HEK293 (cell line): ENCODE measurements at regions of chr11 and their contacts with region 1.

Region 1: GRCh38 chr11:66311965-66312548 is 4.8 kb downstream of the CD248 start:
- H3K4me3 ChIP-seq: peak overlapping the region; percentile 50
- H3K27ac ChIP-seq: peak overlapping the region; percentile 52; the same call in 1 of the 2 replicates
- H3K4me1 ChIP-seq: no peaks in the 10 kb centered on the region
- CTCF ChIP-seq: peak; percentile 81

Region 2: DNA sequence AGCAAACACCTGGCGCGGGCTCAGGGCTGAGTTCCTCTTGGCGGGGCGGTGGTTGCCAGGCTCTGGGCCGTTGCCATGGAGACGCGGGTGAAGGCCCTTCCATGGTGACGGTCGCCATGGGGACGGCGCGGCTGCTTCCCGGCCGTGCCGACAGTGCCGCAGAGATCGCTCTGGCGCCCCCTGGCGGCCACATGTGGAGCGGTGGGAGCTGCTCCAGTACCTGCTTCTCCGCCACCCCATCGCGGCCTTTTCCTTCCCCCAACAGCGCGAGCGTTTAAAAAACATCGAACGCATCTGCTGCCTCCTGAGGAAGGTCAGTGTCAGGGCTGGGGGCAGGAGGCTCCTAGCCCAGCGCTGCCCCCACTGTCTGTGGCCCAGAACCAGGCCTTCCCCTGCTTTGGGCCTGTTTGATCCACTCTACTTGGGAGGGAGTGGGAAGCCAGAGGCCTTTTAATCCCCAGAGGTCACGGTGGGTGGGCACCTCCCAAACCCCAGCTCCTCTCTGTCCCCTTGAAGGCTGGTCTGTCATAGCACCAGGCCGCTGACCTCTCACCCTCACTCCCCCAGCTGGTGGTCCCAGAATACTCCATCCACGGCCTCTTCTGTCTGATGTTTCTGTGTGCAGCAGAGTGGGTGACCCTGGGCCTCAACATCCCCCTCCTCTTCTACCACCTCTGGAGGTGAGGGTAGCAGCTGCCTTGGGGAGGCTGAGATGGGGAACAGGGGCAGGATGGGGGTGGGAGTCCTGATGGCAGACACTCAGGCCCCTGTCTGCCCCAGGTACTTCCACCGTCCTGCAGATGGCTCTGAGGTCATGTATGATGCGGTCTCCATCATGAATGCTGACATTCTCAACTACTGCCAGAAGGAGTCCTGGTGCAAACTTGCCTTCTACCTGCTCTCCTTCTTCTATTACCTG is 29.3 kb before region 1 on chr11:
- CTCF ChIA-PET with region 1: interaction called, 10 read pairs
- POLR2A ChIA-PET with region 1: interaction called, 3 read pairs
- H3K4me3 ChIP-seq: no peak overlapping the region
- H3K27ac ChIP-seq: no peak overlapping the region
- H3K4me1 ChIP-seq: no peaks in the 10 kb centered on the region
- CTCF ChIP-seq: peak; percentile 93

Region 3: DNA sequence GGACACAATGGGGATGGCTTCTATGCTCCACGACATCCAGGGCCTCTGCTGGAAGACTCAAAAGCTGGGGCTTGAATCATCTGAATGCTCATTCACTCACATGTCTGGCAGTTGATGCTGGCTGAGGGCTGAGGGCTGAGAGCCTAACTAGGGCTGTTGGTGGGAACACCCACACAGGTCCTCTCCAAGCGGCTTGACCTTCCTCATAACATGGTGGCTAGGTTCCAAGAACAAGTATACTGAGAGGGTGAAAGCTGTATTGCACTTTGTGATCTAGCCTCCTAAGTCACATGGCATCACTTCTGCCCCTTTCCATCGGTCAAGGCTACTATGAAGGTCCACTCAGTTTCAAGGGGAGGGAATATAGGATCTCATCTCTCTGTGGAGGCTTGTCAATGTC is 12.9 kb before region 1 on chr11:
- CTCF ChIA-PET with region 1: interaction called, 18 read pairs
- POLR2A ChIA-PET with region 1: interaction called, 6 read pairs
- H3K4me3 ChIP-seq: no peak overlapping the region
- H3K27ac ChIP-seq: no peak overlapping the region
- H3K4me1 ChIP-seq: no peaks in the 10 kb centered on the region
- CTCF ChIP-seq: no peak

Region 4: DNA sequence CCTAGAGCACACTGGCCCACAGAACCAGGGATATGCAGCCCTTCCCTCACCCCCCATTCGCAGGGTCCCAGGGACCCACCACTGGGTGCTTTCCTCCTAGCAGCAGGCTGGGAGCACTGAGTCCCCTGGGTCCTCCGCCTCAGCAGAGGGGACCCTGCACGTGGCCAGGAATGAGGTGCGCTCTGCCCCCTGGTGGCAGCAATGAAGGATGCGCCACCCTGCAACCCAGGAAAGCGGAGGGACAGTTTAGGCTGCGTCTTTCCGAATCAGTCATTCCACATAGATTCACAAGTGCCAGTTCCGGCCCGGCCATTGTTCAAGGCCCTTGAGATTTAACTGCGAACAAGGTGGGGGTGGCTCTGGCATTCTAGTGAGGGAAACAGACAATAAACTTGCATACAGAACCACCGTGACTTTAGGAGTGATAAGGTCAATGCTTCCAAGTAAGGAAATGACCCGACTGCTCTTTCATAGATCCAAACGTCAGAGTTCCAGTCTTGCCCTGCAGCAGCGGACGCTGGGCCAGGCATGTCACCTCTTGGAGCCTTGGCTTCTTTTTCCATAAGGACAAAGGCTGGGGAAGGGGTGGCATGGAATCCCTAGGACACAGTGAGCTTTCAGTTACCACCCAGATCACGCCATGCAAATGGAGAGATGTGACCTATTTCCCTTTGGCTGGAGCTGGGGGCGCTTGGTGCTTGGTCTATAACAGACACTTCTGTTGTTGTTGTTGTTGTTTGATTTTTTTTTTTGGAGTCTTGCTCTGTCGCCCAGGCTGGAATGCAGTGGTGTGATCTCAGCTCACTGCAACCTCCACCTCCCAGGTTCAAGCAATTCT is 16.5 kb after region 1 on chr11:
- CTCF ChIA-PET with region 1: interaction called, 25 read pairs
- POLR2A ChIA-PET with region 1: interaction called, 6 read pairs
- H3K4me3 ChIP-seq: no peak overlapping the region
- H3K27ac ChIP-seq: no peak overlapping the region
- H3K4me1 ChIP-seq: no peaks in the 10 kb centered on the region
- CTCF ChIP-seq: peak; percentile 89

Region 5: DNA sequence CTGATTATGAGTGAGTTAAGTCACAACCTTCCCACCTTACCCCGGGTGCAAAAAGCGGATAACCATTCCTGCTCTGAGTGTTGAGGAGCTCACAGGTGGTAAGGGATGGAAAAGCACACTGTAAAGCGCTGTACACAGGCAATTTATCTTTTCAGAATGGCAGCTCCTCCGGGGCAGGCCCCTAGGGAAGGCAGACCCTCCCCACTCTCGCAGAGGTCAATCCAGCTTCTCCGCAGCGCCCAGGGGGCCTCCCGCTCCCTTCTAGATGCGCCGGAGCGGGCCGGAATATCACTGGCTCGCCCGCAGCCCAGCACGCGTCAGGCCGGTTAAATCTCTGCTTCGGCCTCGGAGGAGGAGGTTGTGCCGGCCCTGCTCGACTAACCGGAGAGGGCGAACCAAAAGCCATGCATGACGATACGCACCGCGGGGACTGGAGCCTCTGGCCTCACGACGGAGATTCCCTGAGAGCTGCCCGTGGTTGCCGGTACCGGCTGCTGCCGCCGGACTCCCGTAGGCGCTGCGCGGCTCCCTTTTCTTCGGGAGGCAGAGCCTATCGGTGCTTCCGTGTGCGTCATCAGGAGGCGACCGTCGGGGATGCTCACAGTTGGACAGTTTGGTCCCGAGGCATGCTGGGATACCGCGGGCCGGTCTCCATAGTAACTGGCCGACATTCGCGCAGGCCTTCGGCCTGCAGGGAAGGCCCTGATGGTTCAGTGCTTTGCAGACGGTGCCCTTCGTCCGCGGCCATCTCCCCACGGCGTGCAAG is 32.7 kb after region 1 on chr11 and contains the start of gene BRMS1:
- CTCF ChIA-PET with region 1: interaction called, 28 read pairs
- POLR2A ChIA-PET with region 1: interaction called, 18 read pairs
- H3K4me3 ChIP-seq: peak within 1 kb of the TSS; percentile 52
- H3K27ac ChIP-seq: peak within 1 kb of the TSS; percentile 26; the same call in 1 of the 2 replicates
- H3K4me1 ChIP-seq: no peaks in the 10 kb centered on the region
- CTCF ChIP-seq: 0 out of 2 replicates have a peak, but pooled peaks have one; percentile 25